Aorta (tissue), 5 donors: ENCODE measurements at regions of chr16 and their contacts with region 1.

Region 1: DNA sequence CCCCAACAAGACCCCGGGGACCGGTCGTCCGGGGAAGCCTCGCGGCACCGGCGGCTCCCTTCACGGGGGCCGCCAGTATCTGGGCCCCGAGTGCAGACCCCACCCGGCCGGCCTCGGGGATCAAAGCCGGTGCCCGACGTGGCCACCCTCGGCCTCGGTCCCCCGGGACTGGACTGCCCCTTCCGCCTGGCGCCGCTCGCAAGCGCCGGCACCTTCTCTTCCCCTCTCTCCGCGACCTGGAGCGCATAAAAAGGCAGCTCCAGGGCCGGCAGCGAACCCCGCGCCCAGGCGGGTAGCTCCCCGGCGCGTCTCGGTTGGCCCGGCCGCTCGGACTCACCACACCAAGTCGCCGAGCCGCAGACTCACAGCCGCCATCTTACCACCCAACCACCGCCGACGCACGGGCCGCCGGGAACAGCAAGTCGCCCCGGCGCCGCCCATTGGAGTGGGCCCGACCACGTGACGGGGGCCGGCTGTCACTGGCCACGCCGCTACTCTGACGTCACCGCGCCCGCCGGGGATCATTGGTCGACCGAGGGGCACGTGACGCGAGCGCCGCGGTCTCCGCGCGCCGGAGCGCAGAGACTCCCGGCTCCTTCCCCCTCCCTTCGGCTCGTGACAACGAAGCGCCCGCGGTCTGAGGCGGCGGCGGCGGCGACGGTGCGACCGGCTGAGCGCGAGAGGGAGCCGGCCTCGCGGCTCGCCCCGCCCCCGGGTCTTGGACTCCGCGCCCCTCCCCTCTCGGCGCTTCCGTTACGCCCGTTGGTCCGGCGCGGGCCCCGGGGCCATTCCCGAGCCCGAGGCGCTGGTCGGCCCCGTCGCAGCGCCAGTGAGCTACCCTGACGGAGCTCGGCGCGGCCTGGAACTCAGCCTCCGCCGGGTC is at the starts of genes GLYR1 and UBN1:
- DNase-seq: peak; percentile 100
- ATAC-seq: peak; percentile 99
- H3K4me3 ChIP-seq: peak within 1 kb of the TSS; percentile 86 to 93
- H3K27ac ChIP-seq: peak within 1 kb of the TSS; percentile 67 to 87
- H3K4me1 ChIP-seq: no peaks in the 10 kb centered on the region
- H3K27me3 ChIP-seq: no peaks in the 10 kb centered on the region
- total RNA-seq, gene GLYR1: 70.2 to 73.2 TPM
- total RNA-seq, gene UBN1: 23.0 to 33.2 TPM

Region 2: GRCh38 chr16:4944333-4945281 is 97.5 kb after region 1 on chr16:
- intact Hi-C with region 1: loop called (anchors 5 kb)
- DNase-seq: peak; percentile 95 to 98
- ATAC-seq: peak; percentile 96
- H3K4me3 ChIP-seq: no peak overlapping the region
- H3K27ac ChIP-seq: peak overlapping the region; percentile 82 to 84
- H3K4me1 ChIP-seq: peaks cover 0 to 4% of the 10 kb centered on the region in 2 donors
- H3K27me3 ChIP-seq: no peaks in the 10 kb centered on the region

Region 3: GRCh38 chr16:5033256-5034169 is 186.4 kb after region 1 on chr16 and contains the start of gene NAGPA:
- intact Hi-C with region 1: loop called in 1 of 2 experiments (anchors 5 kb)
- DNase-seq: peak; percentile 93 to 96
- ATAC-seq: peak; percentile 93
- H3K4me3 ChIP-seq: peak within 1 kb of the TSS; percentile 45 to 52
- H3K27ac ChIP-seq: no peak within 1 kb of the TSS
- H3K4me1 ChIP-seq: no peaks in the 10 kb centered on the region
- H3K27me3 ChIP-seq: no peaks in the 10 kb centered on the region
- total RNA-seq, gene NAGPA: 5.4 to 10.9 TPM